Left ventricle myocardium inferior (tissue), 1 donor: ENCODE measurements at regions of chr18 and their contacts with region 1.

Region 1: GRCh38 chr18:61765097-61765496 is 127.7 kb downstream of the RNF152 start:
- DNase-seq: no peak
- H3K4me3 ChIP-seq: no peak overlapping the region
- H3K27ac ChIP-seq: peak overlapping the region; percentile 11
- H3K4me1 ChIP-seq: peaks cover 12% of the 10 kb centered on the region
- H3K27me3 ChIP-seq: no peaks in the 10 kb centered on the region
- CTCF ChIP-seq: no peak

Region 2: DNA sequence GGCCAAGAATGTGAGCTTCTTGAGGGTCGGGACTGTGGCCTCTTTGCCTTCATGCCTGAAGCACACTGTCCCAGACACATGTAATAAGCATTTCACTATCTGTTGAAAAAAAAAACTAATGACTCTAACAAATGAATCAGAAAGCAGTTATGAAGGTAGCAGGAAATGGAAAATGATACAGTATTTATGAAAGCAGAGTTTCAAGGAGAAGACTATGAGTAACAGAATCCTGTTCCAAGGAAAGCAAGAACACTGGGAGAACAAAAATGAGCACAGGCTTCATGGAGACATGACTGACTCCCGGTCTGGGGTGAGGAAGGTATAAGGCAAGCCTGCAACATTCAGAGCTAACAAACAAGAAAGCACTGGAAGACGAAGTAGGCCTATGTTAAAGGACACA is 63.1 kb before region 1 on chr18:
- intact Hi-C with region 1: loop called (anchors 10 kb)
- DNase-seq: no peak
- H3K4me3 ChIP-seq: no peak overlapping the region
- H3K27ac ChIP-seq: peak overlapping the region; percentile 4
- H3K4me1 ChIP-seq: no peaks in the 10 kb centered on the region
- H3K27me3 ChIP-seq: no peaks in the 10 kb centered on the region
- CTCF ChIP-seq: no peak